PC-9 (cell line): ENCODE measurements at regions of chr1 and their contacts with region 1.

Region 1: DNA sequence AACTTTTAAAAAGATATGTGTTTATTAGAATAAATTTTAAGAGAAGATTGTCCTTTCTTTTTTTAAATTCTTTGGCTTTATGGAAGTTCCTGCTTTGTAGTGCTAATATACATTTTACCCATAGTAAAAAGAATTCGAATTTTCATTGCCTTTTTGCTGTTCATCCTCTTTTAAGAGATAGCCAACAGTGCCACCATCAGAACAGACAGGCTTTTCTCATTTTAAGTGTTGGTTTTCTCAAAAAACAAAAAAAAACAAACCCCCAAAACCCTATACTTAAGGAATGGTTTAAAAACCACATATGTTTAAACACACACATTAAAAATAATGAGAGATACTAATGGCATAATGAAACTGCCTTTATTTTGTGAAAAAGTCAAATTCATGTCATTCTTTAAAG is 118.8 kb downstream of the NEK7 start:
- DNase-seq: no peak
- H3K4me3 ChIP-seq: no peak overlapping the region
- H3K27ac ChIP-seq: no peak overlapping the region
- H3K4me1 ChIP-seq: no peaks in the 10 kb centered on the region
- H3K27me3 ChIP-seq: no peaks in the 10 kb centered on the region
- CTCF ChIP-seq: no peak

Region 2: DNA sequence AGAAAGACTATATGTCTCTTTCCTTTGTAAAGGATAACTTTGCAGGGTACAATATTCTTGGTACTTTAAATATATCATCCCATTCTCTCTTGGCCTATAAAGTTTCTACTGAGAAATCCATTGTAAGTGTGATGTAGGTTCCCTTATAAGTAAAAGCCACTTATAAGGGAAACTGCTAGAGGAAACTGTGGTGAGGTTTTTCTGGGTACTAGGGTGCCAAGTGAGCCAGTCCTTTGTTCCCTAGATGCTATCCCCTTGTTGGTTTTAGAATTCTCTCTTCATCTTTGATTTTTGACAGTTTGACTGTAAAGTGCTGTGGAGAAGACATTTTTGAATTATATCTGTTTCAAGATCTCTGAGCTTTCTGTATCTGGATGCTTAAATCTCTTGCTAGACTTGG is 227.7 kb before region 1 on chr1:
- CTCF ChIA-PET with region 1: no interaction called
- POLR2A ChIA-PET with region 1: interaction called, 11 read pairs
- intact Hi-C with region 1: no loop called
- DNase-seq: no peak
- H3K4me3 ChIP-seq: no peak overlapping the region
- H3K27ac ChIP-seq: no peak overlapping the region
- H3K4me1 ChIP-seq: no peaks in the 10 kb centered on the region
- H3K27me3 ChIP-seq: no peaks in the 10 kb centered on the region
- CTCF ChIP-seq: no peak

Region 3: DNA sequence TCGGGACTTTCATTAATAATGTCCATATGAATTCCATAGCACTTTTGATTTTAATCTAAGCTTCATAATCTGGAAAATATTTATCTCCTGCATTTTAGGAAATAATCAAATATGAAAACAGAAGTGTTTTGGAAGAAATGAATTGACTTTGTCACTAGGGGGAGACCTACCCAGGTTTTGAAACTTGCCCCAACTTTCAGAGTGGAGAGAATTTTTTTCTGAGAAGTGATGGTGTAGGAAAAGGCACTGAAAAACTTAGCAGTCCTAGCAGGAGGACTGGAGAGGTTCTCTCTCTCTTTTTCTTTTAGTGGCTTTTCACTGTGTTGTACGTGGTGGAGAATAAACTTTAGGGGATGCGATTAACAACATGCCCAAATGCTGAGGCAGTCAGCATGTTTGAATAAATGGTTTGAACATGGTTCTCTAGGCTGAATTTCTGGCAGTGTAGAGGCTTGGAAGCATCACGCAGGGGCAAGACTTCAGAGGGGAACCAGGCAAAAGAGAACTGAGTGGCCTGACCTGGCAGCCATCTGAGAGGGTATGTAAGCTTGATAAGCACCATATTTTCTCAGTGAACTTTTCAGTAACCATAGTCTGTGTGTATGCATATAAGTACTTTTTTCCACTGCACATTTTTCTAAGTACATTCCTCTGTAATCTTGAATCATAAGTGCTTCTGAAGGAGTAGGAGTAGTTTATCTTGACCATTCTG is 187.1 kb before region 1 on chr1:
- CTCF ChIA-PET with region 1: no interaction called
- POLR2A ChIA-PET with region 1: no interaction called
- intact Hi-C with region 1: loop called (anchors 10 kb)
- DNase-seq: peak in 1 of 2 experiments; percentile 16
- H3K4me3 ChIP-seq: no peak overlapping the region
- H3K27ac ChIP-seq: no peak overlapping the region
- H3K4me1 ChIP-seq: no peaks in the 10 kb centered on the region
- H3K27me3 ChIP-seq: no peaks in the 10 kb centered on the region
- CTCF ChIP-seq: peak; percentile 75